Dorsolateral prefrontal cortex (tissue), 120 donors: ENCODE measurements at regions of chr14 and their contacts with region 1.

Region 1: GRCh38 chr14:73785873-73786695 is 65.5 kb upstream of the PTGR2 start:
- DNase-seq: peak; percentile 45 to 77 (median 59)
- H3K4me3 ChIP-seq: peak overlapping the region; percentile 47 to 86 (median 75)
- H3K27ac ChIP-seq: peak overlapping the region; percentile 62 to 99 (median 96)
- H3K27me3 ChIP-seq: no peaks in the 10 kb centered on the region
- CTCF ChIP-seq: peak in 19 of 56 donors; percentile 6 to 36 (median 15)

Region 2: DNA sequence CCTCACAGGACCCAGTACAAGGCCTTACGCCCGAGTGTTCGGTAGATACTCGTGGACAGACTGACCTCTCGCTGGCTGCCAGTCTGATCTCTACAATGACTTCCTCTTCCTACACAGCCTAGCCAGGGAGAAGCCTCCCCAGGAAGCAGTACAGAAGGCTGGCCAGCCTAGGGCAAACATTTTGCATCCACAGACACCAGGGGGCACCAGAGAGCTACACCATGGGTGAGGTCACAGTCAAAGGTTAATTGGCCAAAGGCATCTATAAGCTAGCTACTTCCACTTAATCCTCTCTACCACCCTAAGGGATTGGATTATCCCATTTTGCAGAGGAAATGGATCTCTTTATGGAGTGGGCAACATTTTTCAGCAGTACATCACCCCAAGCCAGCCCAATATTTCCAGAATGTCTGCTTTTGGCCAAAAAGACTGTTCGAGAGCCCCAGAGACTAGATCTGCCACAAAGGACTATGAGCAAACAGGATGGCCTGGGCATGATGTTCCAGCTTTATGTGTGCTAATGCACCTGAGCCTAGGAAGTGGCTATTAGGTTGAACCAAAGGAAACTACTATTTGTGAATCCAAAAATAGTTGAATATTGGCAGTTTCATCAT is 57.3 kb before region 1 on chr14:
- intact Hi-C with region 1: loop called in 1 of 2 experiments (anchors 5 kb)
- DNase-seq: peak in 8 of 10 donors; percentile 76 to 88 (median 82)
- H3K4me3 ChIP-seq: peak overlapping the region in 1 of 59 donors; percentile 4
- H3K27ac ChIP-seq: peak overlapping the region in 49 of 59 donors; percentile 0 to 74 (median 45)
- H3K27me3 ChIP-seq: no peaks in the 10 kb centered on the region
- CTCF ChIP-seq: peak; percentile 88 to 99 (median 96)

Region 3: GRCh38 chr14:73753959-73754882 is 31.9 kb before region 1 on chr14:
- intact Hi-C with region 1: loop called (anchors 5 kb)
- DNase-seq: peak in 7 of 10 donors; percentile 48 to 75 (median 66)
- H3K4me3 ChIP-seq: peak overlapping the region in 54 of 59 donors; percentile 1 to 53 (median 30)
- H3K27ac ChIP-seq: peak overlapping the region; percentile 49 to 99 (median 91)
- H3K27me3 ChIP-seq: no peaks in the 10 kb centered on the region
- CTCF ChIP-seq: peak in 2 of 56 donors; percentile 18 to 25

Region 4: DNA sequence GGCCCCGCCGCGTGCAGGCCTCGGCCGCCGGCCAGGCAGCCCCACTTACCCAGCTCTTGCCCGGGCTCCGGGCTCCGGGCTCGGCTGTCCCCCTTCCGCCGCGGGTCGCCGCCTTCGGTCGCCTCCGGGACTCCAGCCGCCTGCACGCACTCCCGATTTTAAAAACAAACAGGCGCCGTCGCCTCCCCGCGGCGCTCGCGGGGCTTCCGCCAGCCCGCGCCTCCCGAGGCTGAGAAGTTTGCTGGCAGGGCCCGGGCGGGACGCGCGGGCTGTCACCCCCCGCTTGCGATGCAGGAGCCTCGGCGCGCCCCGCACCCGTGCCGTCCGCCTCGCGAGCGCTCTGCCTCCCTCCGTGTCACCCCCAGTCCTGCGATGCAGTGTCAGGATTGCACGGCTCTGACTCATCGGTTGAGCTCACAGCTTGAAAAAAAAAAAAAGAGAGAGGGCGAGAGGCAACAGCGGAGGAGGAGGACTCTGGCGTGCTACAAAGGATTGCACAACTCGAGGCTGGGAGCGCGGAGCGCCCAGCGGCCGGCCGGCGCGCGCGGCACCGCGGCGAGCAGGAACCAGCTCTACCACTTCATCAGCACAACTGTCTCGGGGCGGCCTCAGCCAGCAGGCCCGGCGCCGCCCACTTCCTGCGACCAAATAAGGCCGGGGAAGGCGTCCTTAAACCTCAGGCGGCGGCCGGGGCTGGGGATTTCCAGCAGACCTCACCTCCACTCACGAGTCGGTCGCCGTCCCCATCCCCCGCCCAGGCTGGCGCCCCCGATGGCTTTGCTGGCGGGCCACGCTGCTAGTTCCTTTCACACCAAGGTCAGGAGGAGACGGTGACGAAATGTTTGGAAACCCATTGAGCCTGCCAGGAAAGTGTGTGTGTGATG is 26.1 kb before region 1 on chr14:
- intact Hi-C with region 1: loop called (anchors 1 to 2 kb)
- DNase-seq: peak; percentile 80 to 95 (median 93)
- H3K4me3 ChIP-seq: peak overlapping the region; percentile 42 to 88 (median 77)
- H3K27ac ChIP-seq: peak overlapping the region; percentile 75 to 99 (median 96)
- H3K27me3 ChIP-seq: no peaks in the 10 kb centered on the region
- CTCF ChIP-seq: peak in 31 of 56 donors; percentile 4 to 46 (median 26)

Region 5: GRCh38 chr14:73825551-73826188 is 39.6 kb after region 1 on chr14:
- intact Hi-C with region 1: loop called in 1 of 2 experiments (anchors 2 kb)
- DNase-seq: peak; percentile 65 to 87 (median 80)
- H3K4me3 ChIP-seq: peak overlapping the region in 2 of 59 donors; percentile 3 to 5
- H3K27ac ChIP-seq: peak overlapping the region in 6 of 59 donors; percentile 6 to 39 (median 27)
- H3K27me3 ChIP-seq: no peaks in the 10 kb centered on the region
- CTCF ChIP-seq: peak; percentile 78 to 99 (median 93)

Region 6: DNA sequence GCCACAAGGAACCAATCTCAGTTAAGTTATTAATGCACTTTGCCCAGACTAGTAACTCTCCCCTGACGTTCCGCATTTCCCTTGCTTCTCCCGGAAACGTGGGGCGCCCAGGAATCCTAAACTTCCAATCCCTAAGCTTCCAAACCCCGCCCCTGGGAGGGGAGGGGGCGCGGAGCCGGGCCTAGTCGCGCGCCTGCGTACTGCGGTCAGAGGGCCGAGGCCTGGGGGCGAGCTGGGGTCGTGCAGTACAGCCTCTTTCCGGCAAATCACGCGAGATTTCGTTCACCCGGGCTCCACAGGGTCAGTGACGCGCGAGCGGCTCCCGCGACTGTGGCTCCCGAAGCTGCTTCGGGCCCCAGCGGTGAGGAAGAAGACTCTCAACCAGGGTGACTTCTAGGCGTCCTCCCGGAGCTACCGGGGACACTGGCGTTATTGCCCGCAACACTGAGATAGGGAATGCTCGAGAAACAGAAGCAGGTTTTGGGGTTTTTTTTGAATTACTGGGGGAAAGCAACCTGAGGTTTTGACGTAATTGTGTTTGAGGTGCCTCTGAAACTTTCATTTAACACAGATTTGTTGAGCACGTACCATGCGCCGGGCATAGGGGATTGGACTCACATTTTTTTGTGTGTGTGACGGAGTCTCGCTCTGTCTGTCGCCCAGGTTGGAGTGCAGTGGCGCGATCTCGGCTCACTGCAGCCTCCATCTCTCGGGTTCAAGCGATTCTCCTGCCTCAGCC is 65.7 kb after region 1 on chr14 and contains the start of gene PTGR2:
- intact Hi-C with region 1: loop called (anchors 5 kb)
- DNase-seq: peak; percentile 82 to 95 (median 91)
- H3K4me3 ChIP-seq: peak within 1 kb of the TSS; percentile 50 to 94 (median 77)
- H3K27ac ChIP-seq: peak within 1 kb of the TSS; percentile 78 to 99 (median 95)
- H3K27me3 ChIP-seq: no peaks in the 10 kb centered on the region
- CTCF ChIP-seq: peak in 34 of 56 donors; percentile 7 to 48 (median 24)
- total RNA-seq, gene PTGR2: 9.4 to 45.6 (median 18.8) TPM